ENCODE measurements at regions of chr1 and their contacts with region 1.

Region 1: GRCh38 chr1:39258146-39258924 is 53.8 kb downstream of the MACF1 start:
- DNase-seq: peak; percentile 67
- CTCF ChIP-seq: peak; percentile 76

Region 2: DNA sequence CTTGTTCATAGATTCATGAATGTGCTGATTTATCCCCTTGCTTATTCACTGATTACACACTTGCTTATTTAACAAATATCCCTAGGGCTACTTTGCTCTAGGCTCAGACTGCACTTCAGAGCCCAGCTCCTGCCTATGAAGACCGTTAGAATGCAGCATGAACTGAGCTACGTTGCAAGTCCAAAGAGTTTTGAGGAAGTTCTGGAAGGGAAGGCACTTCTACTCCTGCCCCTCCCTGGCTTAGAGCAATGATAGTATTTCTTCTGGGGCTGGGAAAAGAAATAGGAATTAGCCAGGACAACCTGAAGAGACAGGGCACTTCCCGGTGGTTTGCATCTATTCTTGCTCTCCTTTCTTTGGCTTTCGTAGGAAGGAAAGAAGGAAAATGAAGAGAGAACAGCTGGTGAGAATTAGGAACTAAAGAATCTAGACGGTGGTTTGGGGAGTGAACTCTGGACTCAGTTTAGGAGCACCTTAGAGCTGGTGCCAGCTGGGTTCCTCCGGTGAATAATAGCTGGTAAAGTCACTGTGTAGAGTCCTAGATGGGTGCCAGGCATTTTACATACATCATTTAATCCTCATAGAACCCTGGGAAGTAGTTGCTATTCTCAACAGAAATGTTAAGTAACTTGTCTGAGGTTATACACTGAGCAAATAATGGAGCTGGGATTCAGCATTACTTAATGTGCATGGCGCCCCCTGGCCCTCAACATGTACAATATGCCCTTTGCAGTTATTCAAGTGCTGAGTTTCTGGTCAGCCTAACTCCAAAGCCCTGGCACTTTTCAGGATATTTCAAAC is 166.3 kb before region 1 on chr1:
- CTCF ChIA-PET with region 1: interaction called, 126 read pairs
- POLR2A ChIA-PET with region 1: no interaction called
- DNase-seq: no peak
- CTCF ChIP-seq: peak; percentile 78

Region 3: DNA sequence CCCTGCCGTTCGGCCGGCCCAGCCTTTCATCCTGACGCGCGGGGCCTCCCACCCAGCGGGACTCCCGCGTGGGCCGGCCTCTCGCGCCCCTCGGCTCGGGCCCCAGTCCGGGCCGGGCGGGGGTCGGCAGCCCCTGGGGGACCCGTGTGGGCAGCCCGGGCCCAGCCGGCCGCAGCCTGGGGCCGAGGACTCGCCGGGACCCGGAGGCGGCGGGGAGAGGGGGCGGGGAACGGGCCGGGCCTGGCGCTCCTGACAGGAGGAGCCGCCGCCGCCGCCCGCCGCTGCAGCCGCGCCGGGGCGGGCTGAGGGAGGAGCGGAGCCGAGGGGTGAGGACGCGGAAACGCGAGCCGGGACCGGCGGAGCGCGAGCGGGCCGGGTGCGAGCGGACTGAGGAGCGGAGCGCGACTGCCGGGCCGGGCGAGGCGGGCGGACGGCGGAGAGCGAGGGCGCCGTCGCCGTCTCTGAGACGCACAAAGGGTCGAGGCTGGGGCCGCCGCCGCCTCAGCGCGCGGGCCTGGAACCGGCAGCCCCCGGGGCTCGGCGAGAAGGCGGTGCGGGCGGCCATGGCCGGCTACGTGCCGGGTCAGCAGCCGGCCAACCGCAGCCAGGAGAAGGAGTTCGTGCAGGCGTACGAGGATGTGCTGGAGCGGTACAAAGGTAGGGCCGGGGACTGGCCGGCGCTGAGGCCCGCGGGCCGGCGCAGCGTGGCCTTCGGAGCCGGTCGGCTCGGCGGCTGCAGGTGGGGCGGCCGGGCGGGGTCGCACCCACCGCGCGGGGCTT is 153.1 kb before region 1 on chr1:
- CTCF ChIA-PET with region 1: interaction called, 126 read pairs
- POLR2A ChIA-PET with region 1: no interaction called
- DNase-seq: peak; percentile 78
- CTCF ChIP-seq: no peak

Region 4: DNA sequence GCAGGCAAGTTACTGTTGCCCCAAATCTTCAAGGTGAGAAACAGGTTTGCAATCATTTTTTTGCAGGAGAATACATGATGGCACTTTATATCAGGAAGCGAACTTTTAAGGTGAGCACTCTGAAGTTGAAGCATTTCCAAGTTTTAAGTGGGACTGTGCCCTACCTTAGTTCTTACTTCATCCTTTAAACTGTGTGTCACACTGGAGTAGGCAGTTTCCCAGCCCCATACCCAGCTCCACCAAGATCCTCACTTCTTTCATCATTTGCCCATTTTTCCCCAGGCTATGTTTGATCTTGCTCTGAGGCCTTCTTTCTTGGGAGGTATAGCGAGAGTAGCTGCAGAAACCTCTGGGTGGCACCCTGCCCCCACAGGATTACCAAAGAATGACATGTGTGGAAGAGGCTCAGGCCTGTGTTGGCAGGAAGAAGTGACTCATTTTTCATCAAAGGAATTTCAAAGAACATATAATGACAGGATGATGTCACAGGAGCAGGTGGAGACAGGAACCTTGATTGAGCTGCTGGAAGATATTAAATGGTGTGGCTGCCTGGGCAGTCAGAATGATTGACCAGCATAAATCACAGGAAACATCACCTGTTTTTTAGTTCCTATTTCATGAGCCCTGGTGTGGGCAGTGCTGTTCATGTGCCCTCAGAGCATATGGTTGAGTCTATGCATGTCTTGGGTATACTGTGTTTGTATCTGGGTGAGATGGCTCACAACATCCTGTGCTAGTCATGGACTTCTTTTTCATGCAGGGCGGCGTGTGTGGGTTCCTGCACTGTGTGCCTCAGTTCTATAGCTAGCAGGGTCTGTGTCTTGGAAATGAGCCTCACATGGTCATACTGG is 74.6 kb before region 1 on chr1:
- CTCF ChIA-PET with region 1: interaction called, 371 read pairs
- POLR2A ChIA-PET with region 1: no interaction called
- DNase-seq: no peak
- CTCF ChIP-seq: peak; percentile 29

Region 5: DNA sequence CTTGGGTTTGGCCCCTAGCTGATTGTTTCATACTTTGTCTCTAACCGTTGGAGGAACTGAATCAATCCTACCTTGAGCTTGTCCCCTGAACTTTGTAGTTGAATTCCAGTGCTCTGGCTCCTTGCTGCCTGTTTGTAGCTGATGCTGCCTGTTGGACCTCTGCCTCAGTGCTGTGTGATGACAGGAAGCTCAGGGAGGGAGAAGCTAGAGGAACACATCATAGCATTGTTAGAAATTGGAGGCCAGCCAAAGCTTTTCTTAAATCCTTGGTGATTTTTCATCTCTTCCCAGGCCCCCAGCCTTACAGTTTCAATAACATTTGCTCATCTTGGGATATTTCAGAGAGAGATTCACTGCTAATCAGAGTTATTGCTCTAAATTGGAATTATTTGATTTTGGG is 19.9 kb before region 1 on chr1:
- CTCF ChIA-PET with region 1: interaction called, 13 read pairs
- POLR2A ChIA-PET with region 1: no interaction called
- DNase-seq: no peak
- CTCF ChIP-seq: no peak

Region 6: GRCh38 chr1:39378377-39378776 is 120.0 kb after region 1 on chr1:
- CTCF ChIA-PET with region 1: no interaction called
- POLR2A ChIA-PET with region 1: no interaction called
- DNase-seq: peak; percentile 20
- CTCF ChIP-seq: peak; percentile 17

Region 7: GRCh38 chr1:40385437-40386358 is 1127.4 kb after region 1 on chr1:
- CTCF ChIA-PET with region 1: no interaction called
- POLR2A ChIA-PET with region 1: no interaction called
- DNase-seq: peak; percentile 52
- CTCF ChIP-seq: no peak